Activated T-helper 2 cell treated with anti-CD3 and anti-CD28 coated beads, Interferon-gamma antibody, Interleukin-2, Interleukin-4, amounts not matched to agents 10 μg/mL and 5 μg/mL and 100 μg/mL, durations not matched to agents 14 hours and 24 hours and 36 hours (primary cell): ENCODE measurements at regions of chr12 and their contacts with region 1.

Region 1: GRCh38 chr12:26937875-26938700 is at the starts of genes FGFR1OP2 and INTS13:
- DNase-seq: peak; percentile 96
- H3K4me3 Mint-ChIP-seq: peak within 1 kb of the TSS; percentile 94
- H3K27ac Mint-ChIP-seq: peak within 1 kb of the TSS; percentile 94
- H3K4me1 Mint-ChIP-seq: peaks cover 62% of the 10 kb centered on the region
- H3K27me3 Mint-ChIP-seq: no peaks in the 10 kb centered on the region
- total RNA-seq, gene FGFR1OP2: 48.4 and 49.0 TPM in 2 replicates
- total RNA-seq, gene INTS13: 54.4 and 65.7 TPM in 2 replicates

Region 2: GRCh38 chr12:26576266-26576665 is 361.8 kb before region 1 on chr12:
- intact Hi-C with region 1: no loop called
- DNase-seq: no peak
- H3K4me3 Mint-ChIP-seq: no peak overlapping the region
- H3K27ac Mint-ChIP-seq: no peak overlapping the region
- H3K4me1 Mint-ChIP-seq: peaks cover 14% of the 10 kb centered on the region
- H3K27me3 Mint-ChIP-seq: no peaks in the 10 kb centered on the region

Region 3: GRCh38 chr12:26748741-26749431 is 189.2 kb before region 1 on chr12:
- intact Hi-C with region 1: loop called (anchors 5 kb)
- DNase-seq: no peak
- H3K4me3 Mint-ChIP-seq: peak overlapping the region; percentile 42
- H3K27ac Mint-ChIP-seq: peak overlapping the region; percentile 65
- H3K4me1 Mint-ChIP-seq: peaks cover 57% of the 10 kb centered on the region
- H3K27me3 Mint-ChIP-seq: no peaks in the 10 kb centered on the region

Region 4: DNA sequence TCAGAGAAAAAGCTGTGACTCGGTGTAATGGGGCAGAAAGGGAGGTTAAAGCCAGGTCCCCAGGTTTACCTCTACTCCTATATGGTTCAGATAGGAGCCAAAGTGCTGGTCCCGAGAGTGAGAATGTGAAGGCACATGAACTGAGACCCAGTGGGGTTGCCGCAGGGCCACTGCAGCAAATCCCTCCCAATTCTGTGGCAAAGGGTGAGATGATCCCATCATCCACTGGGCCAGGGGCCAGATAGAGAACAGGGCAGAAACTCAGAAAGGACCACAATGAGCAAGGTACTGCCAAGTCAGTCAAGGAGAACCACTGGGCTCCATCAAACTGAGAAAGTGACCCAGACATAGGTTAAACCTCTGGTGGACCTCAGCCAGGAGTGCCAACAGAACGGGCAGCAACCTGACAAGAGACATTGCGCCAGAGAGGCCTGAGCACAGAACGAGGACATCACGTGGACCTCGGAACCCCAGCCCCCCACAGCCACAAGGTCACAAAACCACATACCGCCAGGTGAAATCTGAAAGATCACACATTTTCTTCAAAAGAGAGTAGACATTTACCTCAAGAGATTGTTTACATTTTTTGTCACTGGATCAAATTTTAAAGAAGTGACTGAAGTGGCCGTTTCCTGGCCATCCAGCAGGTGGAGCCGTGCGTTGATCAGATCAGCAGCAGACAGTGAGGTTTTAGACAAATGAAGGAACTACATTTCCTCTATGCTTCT is 84.6 kb before region 1 on chr12:
- intact Hi-C with region 1: no loop called
- DNase-seq: peak; percentile 53
- H3K4me3 Mint-ChIP-seq: no peak overlapping the region
- H3K27ac Mint-ChIP-seq: no peak overlapping the region
- H3K4me1 Mint-ChIP-seq: no peaks in the 10 kb centered on the region
- H3K27me3 Mint-ChIP-seq: peaks cover 9% of the 10 kb centered on the region

Region 5: DNA sequence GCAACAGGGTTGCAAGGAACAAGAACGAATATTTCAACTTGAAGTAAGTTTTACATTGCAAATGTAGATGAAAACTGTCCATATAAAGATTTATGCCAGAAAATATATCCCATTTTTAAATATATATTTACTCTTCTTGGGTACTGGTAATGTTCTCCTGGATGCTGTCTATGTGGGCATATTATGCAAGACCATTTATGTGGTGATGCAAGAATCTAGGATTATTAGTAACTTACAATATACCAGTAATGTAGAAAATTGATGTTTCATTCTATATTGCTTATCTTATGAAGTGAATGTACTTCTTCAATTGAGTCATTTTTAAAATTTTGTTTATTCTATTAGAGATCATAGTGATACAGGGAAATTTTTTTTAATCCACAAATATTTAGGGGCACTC is 25.3 kb after region 1 on chr12:
- intact Hi-C with region 1: loop called (anchors 2 kb)
- DNase-seq: no peak
- H3K4me3 Mint-ChIP-seq: no peak overlapping the region
- H3K27ac Mint-ChIP-seq: no peak overlapping the region
- H3K4me1 Mint-ChIP-seq: peaks cover 2% of the 10 kb centered on the region
- H3K27me3 Mint-ChIP-seq: no peaks in the 10 kb centered on the region

Region 6: GRCh38 chr12:27014085-27014858 is 76.2 kb after region 1 on chr12 and contains the start of gene TM7SF3:
- intact Hi-C with region 1: loop called (anchors 1 kb)
- DNase-seq: peak; percentile 94
- H3K4me3 Mint-ChIP-seq: peak within 1 kb of the TSS; percentile 93
- H3K27ac Mint-ChIP-seq: peak within 1 kb of the TSS; percentile 89
- H3K4me1 Mint-ChIP-seq: peaks cover 57% of the 10 kb centered on the region
- H3K27me3 Mint-ChIP-seq: no peaks in the 10 kb centered on the region
- total RNA-seq, gene TM7SF3: 46.7 and 51.5 TPM in 2 replicates

Region 7: DNA sequence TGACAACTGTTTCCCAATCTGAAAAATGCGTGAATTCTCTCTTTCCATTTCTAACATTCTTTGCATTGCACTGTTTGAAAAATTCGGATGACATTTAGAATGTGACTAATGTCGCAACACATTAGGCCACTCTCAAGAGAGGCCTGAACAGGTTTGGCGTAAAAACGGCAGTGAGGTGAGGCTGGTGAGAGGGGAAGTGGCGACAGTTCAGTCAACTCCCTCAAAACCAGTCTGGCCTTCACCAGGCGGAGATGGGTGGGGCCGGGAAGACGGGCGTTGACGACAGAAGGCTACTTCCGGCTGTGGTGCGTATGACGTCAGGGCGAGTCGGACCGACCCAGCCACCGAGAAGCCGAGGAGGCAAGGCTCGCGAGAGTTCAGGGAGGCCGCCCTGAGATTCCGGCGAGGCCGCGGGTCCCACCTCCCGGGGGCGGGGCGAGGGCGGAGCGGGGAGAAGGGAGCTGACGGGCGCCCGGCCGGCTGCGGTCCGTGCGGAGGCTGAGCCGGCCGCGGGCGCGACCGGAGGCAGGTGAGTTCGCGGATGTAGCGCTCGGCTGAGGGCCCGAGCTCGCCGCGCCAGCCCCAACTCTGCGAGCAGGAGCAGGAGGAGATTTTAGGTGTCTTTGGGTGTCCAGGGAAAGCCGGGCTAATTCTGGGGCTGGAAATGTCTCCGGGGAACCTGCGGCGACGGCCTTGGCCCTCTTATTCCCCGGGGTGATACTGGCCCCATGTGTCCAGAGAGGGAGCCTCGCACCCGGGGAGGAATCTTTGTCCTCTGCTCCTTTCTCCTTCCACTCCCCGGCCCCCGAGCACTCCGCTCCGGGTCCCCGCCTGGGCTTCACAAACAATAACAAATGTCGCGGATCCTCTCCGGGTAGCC is 306.0 kb after region 1 on chr12 and contains the start of gene STK38L:
- intact Hi-C with region 1: loop called (anchors 10 kb)
- DNase-seq: peak; percentile 96
- H3K4me3 Mint-ChIP-seq: peak within 1 kb of the TSS; percentile 96
- H3K27ac Mint-ChIP-seq: peak within 1 kb of the TSS; percentile 94
- H3K4me1 Mint-ChIP-seq: peaks cover 35% of the 10 kb centered on the region
- H3K27me3 Mint-ChIP-seq: no peaks in the 10 kb centered on the region
- total RNA-seq, gene STK38L: 23.4 and 24.2 TPM in 2 replicates